ENCODE measurements at regions of chr9 and their contacts with region 1.

Region 1: DNA sequence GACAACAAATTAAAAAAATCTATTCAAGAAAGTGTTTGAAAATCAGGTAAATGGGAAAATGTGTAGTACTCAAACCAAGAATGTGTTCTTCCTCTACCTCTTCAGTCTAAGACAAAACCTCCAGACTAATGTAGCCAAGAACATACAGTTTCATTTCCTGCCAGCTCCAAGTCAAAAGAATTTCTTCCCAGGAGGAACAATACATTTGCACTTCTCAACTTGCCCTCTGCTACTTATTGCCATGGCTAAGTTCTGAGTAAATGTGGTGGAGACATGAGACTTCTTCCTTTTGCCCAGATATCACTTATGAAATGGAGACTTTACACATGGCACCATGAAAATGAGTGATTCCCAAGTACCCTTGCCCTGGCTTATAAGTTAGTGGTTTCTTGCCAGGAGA is 2112.2 kb upstream of the C9orf72 start:
- DNase-seq: no peak
- ATAC-seq: no peak
- H3K4me3 ChIP-seq: no peak overlapping the region
- H3K27ac ChIP-seq: no peak overlapping the region
- H3K4me1 ChIP-seq: no peaks in the 10 kb centered on the region
- H3K27me3 ChIP-seq: no peaks in the 10 kb centered on the region

Region 2: DNA sequence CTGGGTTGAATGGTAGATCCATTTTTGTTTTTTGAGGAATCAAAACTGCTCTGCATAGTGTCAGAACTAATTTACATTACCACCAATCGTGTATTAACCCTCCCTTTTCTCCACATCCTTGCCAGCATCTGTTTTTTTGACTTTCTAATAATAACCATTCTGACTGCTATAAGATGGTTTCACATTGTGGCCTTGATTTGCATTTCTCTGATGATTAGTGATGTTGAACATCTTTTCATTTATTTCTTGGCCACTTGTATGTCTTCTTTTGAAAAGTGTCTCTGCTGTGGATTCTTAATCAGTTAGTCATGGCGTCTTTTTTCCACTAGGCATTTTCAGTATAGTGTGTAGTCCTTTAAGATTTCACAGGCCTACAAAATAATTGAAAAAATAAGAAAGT is 32.1 kb after region 1 on chr9:
- intact Hi-C with region 1: loop called in 1 of 2 experiments (anchors 5 kb)
- DNase-seq: no peak
- ATAC-seq: no peak
- H3K4me3 ChIP-seq: no peak overlapping the region
- H3K27ac ChIP-seq: no peak overlapping the region
- H3K4me1 ChIP-seq: no peaks in the 10 kb centered on the region
- H3K27me3 ChIP-seq: no peaks in the 10 kb centered on the region

Region 3: DNA sequence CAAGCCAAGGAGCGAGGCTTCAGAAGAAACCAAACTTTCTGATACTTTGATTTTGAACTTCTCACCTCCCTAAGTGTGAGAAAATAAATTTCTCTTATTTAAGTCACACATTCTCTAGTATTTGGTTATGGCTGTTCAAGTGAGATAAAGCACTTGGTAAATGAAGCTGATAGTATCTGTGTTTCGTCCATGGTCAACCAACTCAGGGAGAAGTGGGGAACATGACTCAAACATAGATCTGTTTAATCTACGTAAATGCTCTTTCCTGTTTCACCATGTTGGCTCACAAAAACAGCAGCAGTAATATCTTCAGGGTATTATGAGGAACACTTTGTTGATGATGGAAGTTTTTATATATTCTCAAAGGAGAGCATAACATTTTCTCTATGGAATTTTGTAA is 55.0 kb after region 1 on chr9:
- intact Hi-C with region 1: no loop called
- DNase-seq: no peak
- ATAC-seq: no peak
- H3K4me3 ChIP-seq: no peak overlapping the region
- H3K27ac ChIP-seq: no peak overlapping the region
- H3K4me1 ChIP-seq: no peaks in the 10 kb centered on the region
- H3K27me3 ChIP-seq: no peaks in the 10 kb centered on the region